Mammary epithelial cell (primary cell): ENCODE measurements at regions of chr18 and their contacts with region 1.

Region 1: DNA sequence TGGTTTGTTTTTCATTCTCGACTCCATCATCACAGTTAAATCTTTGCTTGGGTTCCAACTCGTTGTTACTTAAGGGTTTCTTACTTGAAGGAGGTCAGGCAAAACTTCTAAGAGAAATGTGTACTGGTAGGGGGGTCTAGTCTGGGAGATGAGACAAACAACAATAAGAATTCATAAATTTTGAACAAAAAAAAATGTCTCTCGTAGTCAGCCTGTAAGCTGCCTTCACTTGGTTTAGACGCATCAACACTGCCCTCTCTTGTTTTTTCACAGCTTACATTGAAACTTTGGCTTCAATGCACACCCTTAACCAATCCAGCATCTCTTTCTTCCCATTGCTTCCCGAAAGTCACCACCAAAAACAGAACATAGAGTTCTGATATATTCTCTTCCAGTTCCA is 576.4 kb upstream of the PIK3C3 start:
- DNase-seq: peak; percentile 39
- H3K4me3 ChIP-seq: no peak overlapping the region
- H3K27ac ChIP-seq: no peak overlapping the region
- H3K4me1 ChIP-seq: no peaks in the 10 kb centered on the region
- H3K27me3 ChIP-seq: no peaks in the 10 kb centered on the region
- CTCF ChIP-seq: peak; percentile 45 to 61

Region 2: DNA sequence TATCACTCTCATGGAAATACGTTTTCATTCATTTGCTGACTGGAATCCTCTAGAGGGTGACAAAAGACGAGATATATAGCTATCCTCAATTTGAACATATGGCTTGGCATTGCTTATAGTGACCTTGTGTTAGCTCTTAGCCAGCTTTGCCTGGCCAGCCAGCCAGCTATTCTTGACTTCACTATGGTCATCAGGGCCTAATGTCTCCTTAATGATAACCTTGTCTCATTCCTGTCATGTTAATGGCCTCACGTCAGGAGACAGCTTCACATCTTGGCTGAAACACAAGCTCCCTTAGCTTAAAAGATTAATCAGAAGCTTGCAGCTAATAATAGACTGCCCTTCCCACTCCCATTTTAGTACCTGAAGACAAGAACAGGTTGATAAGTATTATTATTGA is 941.1 kb before region 1 on chr18:
- CTCF ChIA-PET with region 1: no interaction called
- dilution Hi-C with region 1: no loop called
- in situ Hi-C with region 1: no loop called
- intact Hi-C with region 1: loop called (anchors 5 kb)
- DNase-seq: no peak
- H3K4me3 ChIP-seq: no peak overlapping the region
- H3K27ac ChIP-seq: no peak overlapping the region
- H3K4me1 ChIP-seq: no peaks in the 10 kb centered on the region
- H3K27me3 ChIP-seq: no peaks in the 10 kb centered on the region
- CTCF ChIP-seq: no peak

Region 3: GRCh38 chr18:40868110-40868858 is 510.3 kb before region 1 on chr18:
- CTCF ChIA-PET with region 1: no interaction called
- dilution Hi-C with region 1: no loop called
- in situ Hi-C with region 1: no loop called
- intact Hi-C with region 1: loop called (anchors 5 kb)
- DNase-seq: peak; percentile 99
- H3K4me3 ChIP-seq: no peak overlapping the region
- H3K27ac ChIP-seq: peak overlapping the region; percentile 100
- H3K4me1 ChIP-seq: peaks cover 27% of the 10 kb centered on the region
- H3K27me3 ChIP-seq: no peaks in the 10 kb centered on the region
- CTCF ChIP-seq: no peak

Region 4: DNA sequence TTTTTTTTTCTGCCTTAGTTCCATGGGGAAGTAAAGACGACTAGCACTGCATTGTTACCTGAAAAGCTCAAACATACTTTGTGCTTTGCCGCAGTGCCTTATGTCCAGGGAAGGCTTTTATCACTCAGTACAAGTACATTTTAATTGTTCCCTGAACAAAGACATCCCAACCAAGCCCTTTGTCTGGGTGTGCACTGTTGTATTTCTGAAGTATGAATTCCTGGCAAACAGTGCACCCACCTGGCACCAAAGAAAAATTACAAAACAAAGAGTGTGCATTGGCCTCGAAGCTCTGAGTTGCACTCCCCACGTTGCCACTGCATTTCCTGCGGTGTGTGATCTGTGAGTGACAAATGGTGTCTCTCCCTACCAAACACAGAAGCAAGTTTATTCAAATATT is 282.1 kb before region 1 on chr18:
- CTCF ChIA-PET with region 1: no interaction called
- dilution Hi-C with region 1: no loop called
- in situ Hi-C with region 1: loop called in 1 of 2 experiments (anchors 25 kb)
- intact Hi-C with region 1: loop called (anchors 1 kb)
- DNase-seq: peak; percentile 35
- H3K4me3 ChIP-seq: no peak overlapping the region
- H3K27ac ChIP-seq: no peak overlapping the region
- H3K4me1 ChIP-seq: peaks cover 5% of the 10 kb centered on the region
- H3K27me3 ChIP-seq: no peaks in the 10 kb centered on the region
- CTCF ChIP-seq: peak; percentile 47 to 58

Region 5: DNA sequence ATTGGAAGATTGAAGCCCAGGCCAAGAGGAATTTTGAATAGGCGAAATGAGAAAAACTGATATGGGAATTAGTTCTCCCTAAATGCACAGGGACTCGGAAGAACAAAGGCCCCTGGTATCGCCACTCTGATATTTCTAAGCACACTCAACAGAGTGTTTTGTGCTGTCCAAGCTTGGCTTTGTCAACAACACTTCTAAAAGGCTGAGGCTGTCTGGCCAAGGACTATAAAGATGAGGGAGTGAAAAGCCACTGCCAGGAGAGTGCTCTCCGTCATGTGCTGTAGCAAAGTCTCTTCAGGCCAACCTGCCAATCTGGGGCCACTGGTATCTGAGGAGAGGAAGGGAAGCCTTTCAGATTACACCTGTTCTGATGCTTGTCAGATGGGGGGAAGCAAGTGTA is 34.8 kb before region 1 on chr18:
- CTCF ChIA-PET with region 1: no interaction called
- dilution Hi-C with region 1: no loop called
- in situ Hi-C with region 1: no loop called
- intact Hi-C with region 1: no loop called
- DNase-seq: no peak
- H3K4me3 ChIP-seq: no peak overlapping the region
- H3K27ac ChIP-seq: no peak overlapping the region
- H3K4me1 ChIP-seq: no peaks in the 10 kb centered on the region
- H3K27me3 ChIP-seq: no peaks in the 10 kb centered on the region
- CTCF ChIP-seq: no peak

Region 6: DNA sequence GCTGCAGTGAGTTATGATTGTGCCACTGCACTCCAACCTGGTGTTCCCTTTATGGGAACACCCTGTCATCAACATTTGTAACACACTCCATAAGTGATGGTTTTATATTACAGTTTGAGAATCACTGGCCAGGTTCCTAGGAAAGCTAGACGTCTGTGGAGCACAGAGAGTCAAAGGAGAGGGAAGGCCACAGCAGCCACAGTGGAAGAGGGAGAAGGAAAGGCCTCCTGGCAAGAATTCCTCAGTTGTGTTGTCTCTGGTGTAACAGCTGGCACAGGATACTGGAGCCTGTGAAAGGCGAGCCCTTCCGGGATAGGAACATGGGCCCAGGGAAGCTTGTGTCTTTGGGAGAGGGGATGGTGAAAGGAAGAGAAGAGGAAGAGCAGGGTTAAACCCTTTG is 216.0 kb after region 1 on chr18:
- CTCF ChIA-PET with region 1: no interaction called
- dilution Hi-C with region 1: no loop called
- in situ Hi-C with region 1: no loop called
- intact Hi-C with region 1: no loop called
- DNase-seq: no peak
- H3K4me3 ChIP-seq: no peak overlapping the region
- H3K27ac ChIP-seq: no peak overlapping the region
- H3K4me1 ChIP-seq: no peaks in the 10 kb centered on the region
- H3K27me3 ChIP-seq: peaks cover 3% of the 10 kb centered on the region
- CTCF ChIP-seq: no peak

Region 7: GRCh38 chr18:41745166-41746049 is 366.8 kb after region 1 on chr18:
- CTCF ChIA-PET with region 1: no interaction called
- dilution Hi-C with region 1: no loop called
- in situ Hi-C with region 1: no loop called
- intact Hi-C with region 1: loop called (anchors 1 kb)
- DNase-seq: peak; percentile 28
- H3K4me3 ChIP-seq: no peak overlapping the region
- H3K27ac ChIP-seq: no peak overlapping the region
- H3K4me1 ChIP-seq: no peaks in the 10 kb centered on the region
- H3K27me3 ChIP-seq: no peaks in the 10 kb centered on the region
- CTCF ChIP-seq: peak; percentile 64 to 87

Region 8: DNA sequence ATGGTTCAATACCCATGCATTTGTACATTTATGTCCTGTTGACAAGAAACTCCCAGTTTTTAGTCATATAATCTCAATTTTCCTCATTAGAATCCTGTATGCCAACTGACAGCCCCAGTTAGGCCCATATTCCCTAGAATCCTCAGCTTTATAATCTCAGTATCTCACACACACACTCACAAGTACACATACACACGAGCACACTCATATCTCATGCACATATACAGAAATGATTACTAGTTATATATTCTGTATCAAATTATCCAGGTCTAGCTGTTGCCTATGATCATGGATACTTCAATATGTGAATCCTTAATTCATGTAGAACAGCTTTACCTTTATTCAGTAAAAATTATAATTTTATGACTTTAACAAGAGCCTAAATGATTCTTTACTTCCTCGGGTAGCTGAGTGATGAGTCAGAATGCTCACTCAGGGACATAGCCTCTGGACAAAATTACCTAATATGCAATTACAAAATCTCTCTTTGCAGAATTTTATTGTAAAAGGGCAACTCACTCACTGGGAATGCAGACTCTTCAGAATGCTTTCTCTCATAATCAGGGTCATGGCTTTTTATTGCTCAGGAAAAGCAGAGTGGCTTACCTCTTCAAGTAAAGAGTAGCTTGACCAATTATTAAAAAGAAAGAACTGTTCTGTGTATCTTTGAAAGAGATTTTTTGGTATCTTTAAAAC is 382.9 kb after region 1 on chr18:
- CTCF ChIA-PET with region 1: no interaction called
- dilution Hi-C with region 1: no loop called
- in situ Hi-C with region 1: no loop called
- intact Hi-C with region 1: no loop called
- DNase-seq: peak; percentile 89
- H3K4me3 ChIP-seq: no peak overlapping the region
- H3K27ac ChIP-seq: peak overlapping the region; percentile 34
- H3K4me1 ChIP-seq: peaks cover 24% of the 10 kb centered on the region
- H3K27me3 ChIP-seq: no peaks in the 10 kb centered on the region
- CTCF ChIP-seq: no peak